Activated B cell treated with CpG ODN at 0.5 μM for 24 hours (primary cell): ENCODE measurements at regions of chr16 and their contacts with region 1.

Region 1: GRCh38 chr16:83807710-83808572 is at the start of gene HSBP1:
- DNase-seq: peak; percentile 87
- ATAC-seq: peak; percentile 95
- H3K4me3 Mint-ChIP-seq: peak within 1 kb of the TSS; percentile 97
- H3K27ac Mint-ChIP-seq: peak within 1 kb of the TSS; percentile 94
- H3K4me1 Mint-ChIP-seq: peaks cover 64% of the 10 kb centered on the region
- H3K27me3 Mint-ChIP-seq: no peaks in the 10 kb centered on the region
- CTCF ChIP-seq: no peak
- total RNA-seq, gene HSBP1: 49.8 and 54.0 TPM in 2 replicates

Region 2: DNA sequence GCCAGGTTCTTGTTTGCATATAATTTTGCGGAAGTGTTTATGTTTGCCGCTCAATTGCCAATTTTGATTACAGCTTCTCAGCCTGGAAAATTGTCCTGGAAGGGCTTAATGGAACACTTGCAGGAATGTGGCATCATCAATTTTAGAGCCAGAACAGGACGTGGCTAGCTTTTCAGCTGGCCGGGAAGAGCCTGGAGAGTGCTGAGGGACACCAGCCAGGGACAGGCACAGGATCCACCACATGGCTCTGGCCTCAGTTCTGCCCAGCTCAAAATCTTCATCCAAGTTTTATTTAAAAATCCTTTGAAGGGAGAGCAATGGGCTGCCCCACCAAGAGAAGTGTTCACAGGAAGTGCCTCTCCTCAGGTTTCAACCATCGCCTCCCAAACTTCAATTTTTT is 287.3 kb before region 1 on chr16:
- CTCF ChIA-PET with region 1: no interaction called
- POLR2A ChIA-PET with region 1: no interaction called
- intact Hi-C with region 1: no loop called
- DNase-seq: no peak
- ATAC-seq: no peak
- H3K4me3 Mint-ChIP-seq: no peak overlapping the region
- H3K27ac Mint-ChIP-seq: no peak overlapping the region
- H3K4me1 Mint-ChIP-seq: no peaks in the 10 kb centered on the region
- H3K27me3 Mint-ChIP-seq: peaks cover 4% of the 10 kb centered on the region
- CTCF ChIP-seq: no peak

Region 3: GRCh38 chr16:83744441-83744981 is 63.4 kb before region 1 on chr16:
- CTCF ChIA-PET with region 1: no interaction called
- POLR2A ChIA-PET with region 1: no interaction called
- intact Hi-C with region 1: loop called (anchors 2 kb)
- DNase-seq: peak; percentile 23
- ATAC-seq: peak; percentile 93
- H3K4me3 Mint-ChIP-seq: peak overlapping the region; percentile 39
- H3K27ac Mint-ChIP-seq: peak overlapping the region; percentile 50
- H3K4me1 Mint-ChIP-seq: peaks cover 12% of the 10 kb centered on the region
- H3K27me3 Mint-ChIP-seq: peaks cover 14% of the 10 kb centered on the region
- CTCF ChIP-seq: no peak

Region 4: GRCh38 chr16:83779886-83780285 is 28.1 kb before region 1 on chr16:
- CTCF ChIA-PET with region 1: no interaction called
- POLR2A ChIA-PET with region 1: interaction called, 12 read pairs
- intact Hi-C with region 1: no loop called
- DNase-seq: no peak
- ATAC-seq: no peak
- H3K4me3 Mint-ChIP-seq: no peak overlapping the region
- H3K27ac Mint-ChIP-seq: no peak overlapping the region
- H3K4me1 Mint-ChIP-seq: peaks cover 10% of the 10 kb centered on the region
- H3K27me3 Mint-ChIP-seq: peaks cover 22% of the 10 kb centered on the region
- CTCF ChIP-seq: no peak

Region 5: GRCh38 chr16:83898463-83899271 is 90.7 kb after region 1 on chr16 and contains the start of gene MLYCD:
- CTCF ChIA-PET with region 1: no interaction called
- POLR2A ChIA-PET with region 1: interaction called, 4 read pairs
- intact Hi-C with region 1: loop called (anchors 1 kb)
- DNase-seq: peak; percentile 73
- ATAC-seq: peak; percentile 95
- H3K4me3 Mint-ChIP-seq: peak within 1 kb of the TSS; percentile 93
- H3K27ac Mint-ChIP-seq: peak within 1 kb of the TSS; percentile 75
- H3K4me1 Mint-ChIP-seq: peaks cover 28% of the 10 kb centered on the region
- H3K27me3 Mint-ChIP-seq: peaks cover 10% of the 10 kb centered on the region
- CTCF ChIP-seq: no peak
- total RNA-seq, gene MLYCD: 8.7 and 10.8 TPM in 2 replicates

Region 6: DNA sequence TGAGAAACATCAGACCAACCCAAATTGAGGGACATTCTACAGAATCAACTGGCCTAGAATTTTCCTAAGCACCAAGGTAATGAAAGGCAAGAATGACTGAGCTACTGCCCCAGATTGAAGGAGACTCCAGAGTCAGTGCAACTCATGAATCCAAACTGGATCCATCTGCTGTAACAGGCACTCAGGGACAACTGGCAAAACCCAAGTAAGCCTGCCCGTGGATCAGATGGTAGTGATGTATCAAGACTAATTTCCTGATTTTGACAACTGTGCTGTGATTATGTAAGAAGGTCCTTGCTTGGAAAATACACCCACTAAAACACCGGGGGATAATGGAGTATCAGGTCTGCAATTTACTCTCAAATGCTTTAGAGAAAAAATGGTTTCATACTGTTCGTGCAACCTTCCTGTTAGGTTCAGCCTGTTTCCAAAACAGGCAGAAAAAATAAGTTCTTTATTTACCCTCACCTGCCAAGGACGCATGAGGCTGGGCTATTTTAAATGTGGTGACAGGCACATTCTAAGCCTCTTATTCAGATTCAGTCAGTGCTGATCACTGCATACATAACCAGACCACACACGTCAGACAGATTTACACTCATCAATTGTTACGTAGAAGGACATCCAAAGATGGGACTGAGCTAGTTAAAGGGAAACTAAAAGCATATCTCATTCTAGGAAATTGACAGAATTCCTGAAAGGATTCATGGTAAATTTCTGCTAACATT is 301.8 kb after region 1 on chr16:
- CTCF ChIA-PET with region 1: no interaction called
- POLR2A ChIA-PET with region 1: no interaction called
- intact Hi-C with region 1: no loop called
- DNase-seq: no peak
- ATAC-seq: no peak
- H3K4me3 Mint-ChIP-seq: no peak overlapping the region
- H3K27ac Mint-ChIP-seq: no peak overlapping the region
- H3K4me1 Mint-ChIP-seq: peaks cover 36% of the 10 kb centered on the region
- H3K27me3 Mint-ChIP-seq: no peaks in the 10 kb centered on the region
- CTCF ChIP-seq: no peak

Region 7: GRCh38 chr16:85027349-85027957 is 1219.5 kb after region 1 on chr16 and contains the start of gene KIAA0513:
- CTCF ChIA-PET with region 1: no interaction called
- POLR2A ChIA-PET with region 1: no interaction called
- intact Hi-C with region 1: loop called (anchors 10 kb)
- DNase-seq: peak; percentile 99
- ATAC-seq: peak; percentile 87
- H3K4me3 Mint-ChIP-seq: peak within 1 kb of the TSS; percentile 89
- H3K27ac Mint-ChIP-seq: peak within 1 kb of the TSS; percentile 88
- H3K4me1 Mint-ChIP-seq: peaks cover 42% of the 10 kb centered on the region
- H3K27me3 Mint-ChIP-seq: peaks cover 11% of the 10 kb centered on the region
- CTCF ChIP-seq: no peak
- total RNA-seq, gene KIAA0513: 0.62 and 1.1 TPM in 2 replicates